ENCODE measurements at regions of chr19 and their contacts with region 1.

Region 1: GRCh38 chr19:12484371-12485051 is at the start of gene ZNF709:
- DNase-seq: peak; percentile 79
- H3K4me3 Mint-ChIP-seq: peak within 1 kb of the TSS; percentile 91
- H3K27ac Mint-ChIP-seq: peak within 1 kb of the TSS; percentile 35
- H3K4me1 Mint-ChIP-seq: peaks cover 27% of the 10 kb centered on the region
- H3K27me3 Mint-ChIP-seq: no peaks in the 10 kb centered on the region
- total RNA-seq, gene ZNF709: 0.26 TPM in 1 of 2 replicates, not detected in the other

Region 2: DNA sequence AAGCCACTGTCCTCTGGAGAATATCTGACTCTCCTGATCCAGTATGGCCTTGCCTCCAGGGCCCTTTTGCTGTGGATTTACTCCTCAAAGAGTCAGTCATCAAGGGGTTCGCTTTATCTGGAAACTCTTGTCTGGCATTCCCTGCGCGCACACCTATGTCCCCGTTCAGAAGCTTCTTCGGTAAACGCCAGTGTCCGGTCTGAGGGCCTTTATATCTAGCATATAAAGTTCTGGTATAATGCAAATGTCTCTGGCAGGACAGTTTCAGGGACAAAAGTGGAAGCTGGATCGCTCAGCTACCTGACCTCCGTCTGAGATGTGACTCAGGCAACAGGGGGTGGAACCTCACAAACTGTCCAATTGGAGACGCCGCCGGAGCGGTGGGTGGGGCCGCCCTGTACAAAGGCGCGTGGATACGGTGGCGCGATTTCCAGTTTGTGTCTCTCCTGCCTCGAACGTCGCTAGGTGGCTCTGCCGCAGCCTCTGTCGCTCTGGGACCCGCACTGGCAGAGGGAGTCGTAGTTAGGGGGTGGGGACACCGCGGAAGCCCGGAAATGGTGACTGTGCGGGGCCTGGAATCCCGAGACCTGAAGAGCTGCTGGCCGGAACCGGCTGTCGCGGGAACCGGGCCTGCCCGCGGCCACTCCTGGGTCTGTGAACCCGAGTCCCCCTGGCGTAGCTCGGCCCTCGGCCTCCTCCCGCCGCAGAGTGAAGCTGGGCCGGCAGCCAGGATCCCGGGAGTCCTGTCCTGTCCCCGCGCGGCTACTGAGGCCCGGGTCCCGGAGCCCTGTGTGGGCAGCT is 10.7 kb after region 1 on chr19:
- intact Hi-C with region 1: loop called (anchors 1 kb)
- DNase-seq: peak; percentile 78
- H3K4me3 Mint-ChIP-seq: peak overlapping the region; percentile 83
- H3K27ac Mint-ChIP-seq: peak overlapping the region; percentile 52
- H3K4me1 Mint-ChIP-seq: peaks cover 6% of the 10 kb centered on the region
- H3K27me3 Mint-ChIP-seq: peaks cover 2% of the 10 kb centered on the region

Measured in activated T-helper 1 cell treated with anti-CD3 and anti-CD28 coated beads, Interleukin-12 subunit alpha, Interleukin-12 subunit beta, Interleukin-2, Interleukin-4 antibody, amounts not matched to agents 30 ng/mL and 10 ng/mL and 1 ng/mL, durations not matched to agents 14 hours and 24 hours and 36 hours (primary cell).